Right ventricle myocardium inferior (tissue), 1 donor: ENCODE measurements at regions of chr17 and their contacts with region 1.

Region 1: GRCh38 chr17:2202996-2203575 is 100.5 kb downstream of the SMG6 start:
- DNase-seq: no peak
- ATAC-seq: peak; percentile 57

Region 2: DNA sequence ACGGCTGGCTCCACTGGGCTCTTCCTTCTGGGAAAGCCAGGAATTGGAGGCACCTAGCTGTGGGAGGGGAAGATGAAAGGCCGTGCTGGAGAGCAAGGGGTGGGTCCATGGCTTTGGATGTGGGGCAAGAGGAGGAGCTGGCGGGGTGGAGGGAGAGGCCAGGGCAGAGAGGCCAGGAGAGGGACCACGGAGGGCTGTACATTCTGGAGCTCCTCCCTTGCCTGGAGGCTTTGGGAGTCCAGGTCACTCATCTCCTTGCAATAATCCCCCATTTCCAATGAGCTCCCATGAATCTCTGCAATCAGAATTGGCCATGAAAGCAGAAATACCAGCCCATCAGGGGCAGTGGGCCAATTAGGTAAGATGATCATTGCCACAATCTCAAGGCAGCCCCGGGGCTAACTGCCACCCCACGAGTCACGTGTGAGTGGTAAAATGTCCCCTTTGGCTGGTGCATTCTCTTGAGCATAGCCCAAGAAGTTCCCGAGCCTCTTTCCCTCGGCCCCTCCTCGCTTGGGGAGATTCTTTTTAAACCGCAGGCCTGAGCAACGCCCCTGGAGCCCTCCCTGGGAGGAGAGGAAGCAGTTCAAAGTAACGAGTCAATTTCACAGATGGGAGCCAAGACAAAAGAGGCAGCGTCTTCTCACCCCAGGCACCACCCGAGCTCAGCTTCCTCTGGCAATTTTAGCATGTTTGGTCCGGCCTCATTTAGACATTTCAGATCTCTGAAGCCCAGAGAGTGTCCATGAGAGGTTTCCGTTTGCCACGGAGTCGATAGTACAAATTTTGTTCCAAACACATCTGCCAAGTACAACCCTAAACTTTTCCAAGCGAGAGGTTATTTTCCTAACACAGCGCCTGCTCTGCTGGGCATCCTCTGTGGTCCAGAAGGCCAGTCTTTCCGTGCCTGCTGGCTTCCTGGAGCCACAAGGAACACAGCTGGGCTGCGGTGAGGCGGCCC is 191.4 kb before region 1 on chr17:
- intact Hi-C with region 1: no loop called
- DNase-seq: no peak
- ATAC-seq: no peak

Region 3: GRCh38 chr17:2190014-2190413 is 13.1 kb before region 1 on chr17:
- intact Hi-C with region 1: loop called (anchors 1 kb)
- DNase-seq: no peak
- ATAC-seq: peak; percentile 48

Region 4: DNA sequence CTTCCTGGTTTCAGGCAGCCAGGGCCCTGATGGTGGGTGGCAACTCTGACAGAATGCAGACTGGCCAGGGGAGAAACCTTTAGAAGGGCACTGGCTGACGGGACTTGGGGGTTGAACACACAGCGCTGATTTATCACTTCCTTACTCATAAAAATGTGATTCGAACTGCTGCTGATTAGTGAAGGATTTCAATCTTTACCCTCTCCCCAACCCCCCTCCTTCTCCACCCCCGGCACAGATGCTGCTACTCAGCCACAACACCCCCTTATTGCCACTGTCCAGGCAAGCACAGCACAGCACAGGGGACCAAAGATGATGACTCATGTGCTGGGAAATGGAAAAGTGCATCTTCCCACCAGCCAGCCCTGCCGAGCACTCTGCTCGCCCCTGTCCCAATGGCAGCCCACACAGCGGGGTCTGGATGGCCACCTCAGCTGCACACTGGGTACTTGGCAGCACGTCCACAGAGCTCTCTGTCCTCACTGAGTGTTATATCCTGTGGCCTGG is 30.4 kb after region 1 on chr17:
- intact Hi-C with region 1: no loop called
- DNase-seq: no peak
- ATAC-seq: peak; percentile 17

Region 5: DNA sequence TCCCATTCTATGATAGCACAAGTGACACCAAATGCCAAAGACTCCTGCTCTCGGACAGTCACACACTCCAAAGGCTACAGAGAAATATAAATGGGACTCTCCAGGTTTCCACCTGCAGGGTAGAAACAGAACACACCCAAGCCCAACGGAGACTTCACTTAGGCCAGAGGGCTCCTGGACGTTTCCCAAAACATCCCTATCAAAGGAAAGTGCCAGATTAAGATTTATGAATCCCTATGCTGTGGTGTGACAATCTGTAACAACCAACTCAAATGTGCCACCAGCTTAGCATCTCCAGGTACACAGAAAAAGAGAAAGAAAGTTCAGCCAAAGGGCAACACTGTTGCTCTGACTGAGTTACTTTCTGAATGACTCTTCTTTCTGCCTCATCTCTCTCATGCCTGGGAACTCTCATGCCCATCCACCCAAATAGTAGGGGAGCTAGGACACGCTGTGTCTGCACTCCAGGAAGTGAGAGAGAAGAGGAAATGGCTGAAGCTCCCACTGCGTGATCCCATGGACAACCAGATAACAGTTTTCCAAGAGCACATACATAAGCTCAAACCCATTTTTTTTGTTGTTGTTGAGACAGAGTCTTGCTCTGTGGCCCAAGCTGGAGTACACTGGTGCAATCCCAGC is 50.8 kb after region 1 on chr17:
- intact Hi-C with region 1: no loop called
- DNase-seq: no peak
- ATAC-seq: no peak